Heart right ventricle (tissue), 16 donors: ENCODE measurements at regions of chr18 and their contacts with region 1.

Region 1: DNA sequence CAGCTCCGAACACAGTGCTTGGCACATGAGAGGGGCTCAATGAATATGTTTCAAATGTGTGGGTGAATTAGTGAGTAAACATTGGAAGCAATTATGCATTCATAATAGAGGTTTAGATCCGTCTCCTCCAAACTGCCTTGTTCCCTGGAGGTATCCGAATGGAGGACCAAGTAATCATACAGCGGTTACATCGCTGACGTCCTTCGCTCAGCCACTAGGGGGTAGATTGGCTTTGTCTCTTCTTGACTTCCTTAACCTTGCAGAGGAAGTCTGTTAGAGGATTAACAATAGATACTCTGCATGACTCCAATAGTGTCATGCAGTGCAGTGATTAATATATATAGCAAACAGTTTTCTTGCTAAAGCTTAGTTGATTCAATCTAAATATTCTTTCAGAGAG is 517.0 kb downstream of the PTPRM start:
- DNase-seq: peak; percentile 19 to 32
- ATAC-seq: peak in 7 of 8 donors; percentile 69 to 89 (median 76)
- H3K4me3 ChIP-seq: no peak overlapping the region
- H3K27ac ChIP-seq: no peak overlapping the region
- H3K4me1 ChIP-seq: peaks cover 0 to 28% (median 3%) of the 10 kb centered on the region in 9 donors
- H3K27me3 ChIP-seq: no peaks in the 10 kb centered on the region
- CTCF ChIP-seq: peak; percentile 32 to 75 (median 61)

Region 2: GRCh38 chr18:8020132-8020846 is 63.9 kb before region 1 on chr18:
- intact Hi-C with region 1: no loop called
- DNase-seq: no peak
- ATAC-seq: peak in 1 of 8 donors; percentile 42
- H3K4me3 ChIP-seq: no peak overlapping the region
- H3K27ac ChIP-seq: no peak overlapping the region
- H3K4me1 ChIP-seq: peaks cover 0 to 31% (median 4%) of the 10 kb centered on the region in 9 donors
- H3K27me3 ChIP-seq: no peaks in the 10 kb centered on the region
- CTCF ChIP-seq: no peak

Region 3: GRCh38 chr18:8140841-8141501 is 56.8 kb after region 1 on chr18:
- intact Hi-C with region 1: loop called in 1 of 10 experiments (anchors 10 kb)
- DNase-seq: peak; percentile 26 to 30
- ATAC-seq: peak in 7 of 8 donors; percentile 44 to 91 (median 82)
- H3K4me3 ChIP-seq: no peak overlapping the region
- H3K27ac ChIP-seq: peak overlapping the region; percentile 17 to 86 (median 67)
- H3K4me1 ChIP-seq: peaks cover 17 to 63% (median 55%) of the 10 kb centered on the region in 9 donors
- H3K27me3 ChIP-seq: no peaks in the 10 kb centered on the region
- CTCF ChIP-seq: no peak

Region 4: GRCh38 chr18:8367217-8367988 is 283.2 kb after region 1 on chr18:
- intact Hi-C with region 1: loop called in 2 of 10 experiments (anchors 10 kb)
- DNase-seq: peak; percentile 11 to 38
- ATAC-seq: peak; percentile 34 to 70 (median 60)
- H3K4me3 ChIP-seq: peak overlapping the region in 9 of 10 donors; percentile 4 to 50 (median 44)
- H3K27ac ChIP-seq: no peak overlapping the region
- H3K4me1 ChIP-seq: peaks cover 0 to 36% (median 23%) of the 10 kb centered on the region in 9 donors
- H3K27me3 ChIP-seq: peaks cover 0 to 15% (median 0%) of the 10 kb centered on the region in 7 donors
- CTCF ChIP-seq: peak; percentile 25 to 73 (median 50)

Region 5: DNA sequence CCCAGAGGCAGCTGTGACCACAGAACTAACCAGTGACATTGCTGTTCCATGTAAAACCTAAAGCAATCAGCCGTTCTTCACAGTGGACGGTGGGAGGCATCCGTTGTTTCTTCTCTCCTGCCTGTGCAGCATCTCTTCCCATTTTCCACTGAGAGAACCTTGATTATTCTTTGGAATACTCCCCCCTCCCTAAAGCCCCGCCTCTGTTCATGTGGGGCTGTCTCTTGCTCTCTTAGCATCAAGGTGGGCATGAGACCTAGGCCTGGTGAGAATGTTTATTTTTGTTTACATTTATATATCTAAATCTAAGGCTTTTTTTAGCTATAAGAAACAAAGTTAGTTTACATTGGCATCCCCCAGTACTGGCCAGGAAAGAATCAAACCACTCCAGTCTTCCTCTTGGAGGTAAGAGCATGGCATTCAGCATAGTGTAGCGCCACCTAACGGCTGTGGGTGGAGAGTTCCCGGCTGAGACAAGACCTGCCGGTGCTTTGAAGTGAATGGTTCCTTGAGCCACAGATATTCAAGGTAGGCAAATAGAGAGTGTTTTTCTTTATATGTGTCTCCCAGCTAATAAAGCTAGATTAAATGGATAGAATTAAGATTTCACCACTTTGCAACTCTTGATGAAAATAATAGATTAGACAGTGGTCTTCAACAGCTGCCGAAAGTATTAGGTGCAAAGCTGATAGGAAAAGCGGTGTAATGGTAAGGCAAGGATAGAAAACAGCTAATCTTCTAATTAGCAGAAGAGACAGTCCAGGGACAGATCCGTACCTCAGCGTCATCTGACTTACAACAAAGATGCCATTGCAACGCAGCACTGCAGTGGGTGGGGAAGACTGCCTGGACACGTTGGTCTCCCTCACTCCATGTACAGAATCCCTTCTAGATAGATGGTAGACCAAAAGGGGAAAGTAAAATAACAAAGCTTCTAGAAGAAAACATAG is 305.5 kb after region 1 on chr18:
- intact Hi-C with region 1: loop called in 3 of 10 experiments (anchors 10 kb)
- DNase-seq: peak; percentile 59
- ATAC-seq: peak; percentile 81 to 90 (median 84)
- H3K4me3 ChIP-seq: no peak overlapping the region
- H3K27ac ChIP-seq: no peak overlapping the region
- H3K4me1 ChIP-seq: peaks cover 0 to 7% (median 0%) of the 10 kb centered on the region in 9 donors
- H3K27me3 ChIP-seq: no peaks in the 10 kb centered on the region
- CTCF ChIP-seq: peak; percentile 48 to 86 (median 79)